ENCODE measurements at regions of chr5 and their contacts with region 1.

Region 1: GRCh38 chr5:78648359-78649210 is at the start of gene LHFPL2:
- DNase-seq: peak; percentile 65
- H3K4me3 Mint-ChIP-seq: peak within 1 kb of the TSS; percentile 90
- H3K27ac Mint-ChIP-seq: peak within 1 kb of the TSS; percentile 94
- H3K4me1 Mint-ChIP-seq: peaks cover 35% of the 10 kb centered on the region
- H3K27me3 Mint-ChIP-seq: no peaks in the 10 kb centered on the region
- CTCF ChIP-seq: no peak
- total RNA-seq, gene LHFPL2: 45.9 and 93.3 TPM in 2 replicates

Region 2: DNA sequence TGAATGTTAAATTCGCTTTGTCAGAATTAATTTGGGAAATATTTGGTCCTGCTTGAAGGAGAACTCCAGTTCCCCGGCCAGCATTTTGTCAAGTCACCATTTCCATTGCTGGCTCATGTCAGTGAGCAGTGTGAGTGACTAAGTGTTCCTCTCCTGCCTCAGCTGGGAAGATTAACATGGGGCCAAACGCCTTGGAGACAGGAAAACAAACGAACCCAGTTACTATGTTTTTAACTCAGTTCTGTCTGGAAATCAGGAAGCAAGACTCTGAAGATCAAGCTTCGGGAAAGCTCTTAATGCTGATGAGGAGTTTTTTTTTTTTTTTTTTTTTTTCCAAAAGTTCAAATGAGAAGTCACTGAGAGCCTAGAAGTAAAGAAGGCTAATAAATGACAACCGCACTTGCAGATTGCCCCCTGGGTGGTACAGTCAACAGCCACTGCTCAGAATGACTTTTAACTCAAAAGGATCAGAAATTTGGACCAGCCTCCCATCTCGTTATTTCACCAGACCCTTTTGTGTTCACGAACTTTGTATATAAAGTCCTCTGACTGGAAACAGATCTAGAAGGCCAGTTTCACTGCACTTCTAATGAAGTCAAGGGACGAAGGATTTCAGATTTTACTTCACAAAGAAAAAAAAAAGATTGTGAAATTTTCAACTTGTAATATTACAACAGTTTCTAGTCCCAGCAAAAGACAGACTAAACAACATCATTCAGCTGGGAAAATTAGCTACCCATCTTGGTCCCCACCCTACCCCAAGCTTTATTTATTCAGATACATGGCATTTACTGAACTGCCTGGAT is 121.3 kb before region 1 on chr5:
- CTCF ChIA-PET with region 1: no interaction called
- POLR2A ChIA-PET with region 1: no interaction called
- intact Hi-C with region 1: loop called (anchors 5 kb)
- DNase-seq: peak; percentile 87
- H3K4me3 Mint-ChIP-seq: peak overlapping the region; percentile 55
- H3K27ac Mint-ChIP-seq: peak overlapping the region; percentile 99
- H3K4me1 Mint-ChIP-seq: peaks cover 64% of the 10 kb centered on the region
- H3K27me3 Mint-ChIP-seq: no peaks in the 10 kb centered on the region
- CTCF ChIP-seq: no peak

Region 3: GRCh38 chr5:78594610-78595457 is 53.8 kb before region 1 on chr5:
- CTCF ChIA-PET with region 1: no interaction called
- POLR2A ChIA-PET with region 1: no interaction called
- intact Hi-C with region 1: no loop called
- DNase-seq: peak; percentile 92
- H3K4me3 Mint-ChIP-seq: no peak overlapping the region
- H3K27ac Mint-ChIP-seq: peak overlapping the region; percentile 73
- H3K4me1 Mint-ChIP-seq: peaks cover 51% of the 10 kb centered on the region
- H3K27me3 Mint-ChIP-seq: no peaks in the 10 kb centered on the region
- CTCF ChIP-seq: no peak

Region 4: DNA sequence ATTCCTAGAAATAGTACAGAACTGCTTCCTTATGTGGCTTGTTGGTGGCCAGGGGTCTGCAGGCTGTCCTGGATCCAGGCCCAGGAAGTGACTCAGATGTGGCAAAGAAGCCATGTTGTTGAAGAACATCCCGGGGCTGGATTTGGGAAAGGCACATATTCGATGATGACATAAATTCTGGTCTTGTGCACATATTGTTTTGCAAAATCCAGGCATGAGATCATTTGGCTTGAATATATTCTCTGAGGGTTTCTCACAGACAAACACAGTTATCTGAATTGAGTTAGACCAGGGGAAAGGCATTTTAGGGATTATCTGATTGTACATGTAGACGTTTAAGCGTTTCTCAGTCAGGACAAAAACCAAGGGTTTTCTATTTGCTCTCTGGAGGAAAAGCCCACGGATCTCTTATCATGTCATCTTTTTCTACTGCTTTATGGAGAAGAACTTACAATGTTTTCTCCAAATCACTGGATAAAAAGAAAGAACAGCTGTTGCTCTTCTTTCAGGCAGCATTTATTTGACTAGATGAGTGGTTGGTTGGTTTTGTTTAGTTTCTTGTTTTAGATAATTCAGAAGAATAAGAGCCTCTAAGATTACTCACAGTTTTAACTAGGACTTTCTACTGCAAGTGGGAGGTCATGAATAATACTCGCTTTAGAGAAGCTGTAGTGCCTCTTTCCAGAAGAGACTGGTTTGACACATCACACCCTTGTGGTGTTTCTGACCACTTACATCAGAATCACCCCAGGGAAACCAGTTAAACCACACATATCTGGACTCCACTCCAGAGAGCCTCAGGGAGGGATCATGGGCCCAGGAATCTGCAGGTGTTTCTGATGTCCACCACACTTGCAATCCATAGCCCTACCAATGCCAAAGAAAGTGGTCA is 29.4 kb after region 1 on chr5:
- CTCF ChIA-PET with region 1: no interaction called
- POLR2A ChIA-PET with region 1: interaction called, 7 read pairs
- intact Hi-C with region 1: loop called (anchors 2 kb)
- DNase-seq: peak; percentile 77
- H3K4me3 Mint-ChIP-seq: no peak overlapping the region
- H3K27ac Mint-ChIP-seq: peak overlapping the region; percentile 85
- H3K4me1 Mint-ChIP-seq: peaks cover 25% of the 10 kb centered on the region
- H3K27me3 Mint-ChIP-seq: no peaks in the 10 kb centered on the region
- CTCF ChIP-seq: no peak

Region 5: GRCh38 chr5:78779771-78780616 is 131.4 kb after region 1 on chr5:
- CTCF ChIA-PET with region 1: no interaction called
- POLR2A ChIA-PET with region 1: no interaction called
- intact Hi-C with region 1: loop called (anchors 10 kb)
- DNase-seq: peak; percentile 87
- H3K4me3 Mint-ChIP-seq: no peak overlapping the region
- H3K27ac Mint-ChIP-seq: peak overlapping the region; percentile 16
- H3K4me1 Mint-ChIP-seq: peaks cover 18% of the 10 kb centered on the region
- H3K27me3 Mint-ChIP-seq: no peaks in the 10 kb centered on the region
- CTCF ChIP-seq: no peak

Region 6: GRCh38 chr5:78964887-78965286 is 316.3 kb after region 1 on chr5:
- CTCF ChIA-PET with region 1: interaction called, 5 read pairs
- POLR2A ChIA-PET with region 1: interaction called, 3 read pairs
- intact Hi-C with region 1: loop called (anchors 10 kb)
- DNase-seq: peak; percentile 59
- H3K4me3 Mint-ChIP-seq: no peak overlapping the region
- H3K27ac Mint-ChIP-seq: no peak overlapping the region
- H3K4me1 Mint-ChIP-seq: no peaks in the 10 kb centered on the region
- H3K27me3 Mint-ChIP-seq: no peaks in the 10 kb centered on the region
- CTCF ChIP-seq: peak; percentile 53